MCF 10A (cell line): ENCODE measurements at regions of chr1 and their contacts with region 1.

Region 1: DNA sequence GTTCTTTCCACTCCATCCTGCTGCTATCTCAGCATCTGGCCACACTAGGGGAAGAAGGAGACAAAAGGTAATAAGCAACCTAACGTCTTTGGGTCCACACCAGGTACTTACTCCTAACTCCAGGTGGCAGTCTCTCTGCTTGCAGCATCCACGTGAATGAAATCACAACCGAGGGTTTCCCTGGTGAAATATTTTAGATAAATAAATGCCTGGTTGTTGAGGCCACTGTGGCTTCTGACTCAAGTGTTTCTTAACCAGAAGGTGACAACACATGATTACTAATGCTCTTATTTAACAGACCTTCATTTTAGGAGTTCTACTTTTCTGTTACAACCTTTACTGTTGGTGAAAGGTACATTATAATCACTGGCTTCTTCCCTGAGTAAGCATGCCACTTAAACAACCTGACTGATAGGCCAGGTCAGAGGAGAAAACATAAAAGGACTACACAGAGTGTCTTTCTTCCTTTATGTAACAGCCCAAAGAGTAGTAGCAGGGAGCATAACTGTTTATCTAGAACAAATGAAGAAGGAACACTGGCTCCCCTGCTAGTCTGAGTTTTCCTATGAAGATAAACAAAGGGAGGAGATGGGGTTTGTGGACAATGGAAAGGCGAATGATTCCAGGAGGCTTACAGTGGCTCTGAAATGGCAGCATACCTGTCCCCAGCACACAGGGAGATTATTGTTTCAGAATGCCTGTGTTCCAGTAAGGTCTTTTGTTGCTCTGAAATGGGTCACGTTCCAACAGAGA is 59.9 kb downstream of the SYT6 start:
- DNase-seq: peak; percentile 45
- H3K4me3 Mint-ChIP-seq: no peak overlapping the region
- H3K27ac Mint-ChIP-seq: no peak overlapping the region
- H3K4me1 Mint-ChIP-seq: peaks cover 11% of the 10 kb centered on the region
- H3K27me3 Mint-ChIP-seq: peaks cover 46% of the 10 kb centered on the region
- CTCF ChIP-seq: peak; percentile 23

Region 2: DNA sequence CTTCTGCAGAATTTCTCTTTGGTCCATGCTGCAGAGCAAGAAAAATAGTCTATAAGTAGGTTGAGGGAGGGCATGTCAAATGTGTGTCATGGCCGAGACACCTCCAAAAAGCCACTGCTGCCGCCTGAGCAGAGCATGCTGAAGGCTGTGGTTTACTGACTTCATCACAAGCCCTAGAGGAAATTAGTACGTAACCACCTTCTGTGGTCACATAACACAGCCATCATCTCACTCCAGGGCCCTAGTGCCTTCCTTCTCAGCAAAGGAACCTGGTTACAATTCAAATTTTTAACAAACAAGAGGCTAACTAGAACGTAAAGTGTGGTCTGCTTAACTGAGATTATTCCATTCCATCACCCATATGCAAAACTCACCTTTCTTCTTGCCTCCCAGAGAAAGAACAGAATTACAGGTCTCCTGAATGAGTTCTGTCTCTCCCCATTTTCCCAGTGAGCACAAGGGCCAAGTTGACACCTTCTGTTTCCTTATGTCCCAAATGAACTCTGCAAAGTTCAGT is 222.1 kb before region 1 on chr1 and contains the start of gene PTPN22:
- CTCF ChIA-PET with region 1: no interaction called
- POLR2A ChIA-PET with region 1: no interaction called
- intact Hi-C with region 1: no loop called
- DNase-seq: peak; percentile 45
- H3K4me3 Mint-ChIP-seq: no peak within 1 kb of the TSS
- H3K27ac Mint-ChIP-seq: peak within 1 kb of the TSS; percentile 12
- H3K4me1 Mint-ChIP-seq: peaks cover 11% of the 10 kb centered on the region
- H3K27me3 Mint-ChIP-seq: no peaks in the 10 kb centered on the region
- CTCF ChIP-seq: no peak
- total RNA-seq, gene PTPN22: 0.42 and 0.89 TPM in 2 replicates

Region 3: DNA sequence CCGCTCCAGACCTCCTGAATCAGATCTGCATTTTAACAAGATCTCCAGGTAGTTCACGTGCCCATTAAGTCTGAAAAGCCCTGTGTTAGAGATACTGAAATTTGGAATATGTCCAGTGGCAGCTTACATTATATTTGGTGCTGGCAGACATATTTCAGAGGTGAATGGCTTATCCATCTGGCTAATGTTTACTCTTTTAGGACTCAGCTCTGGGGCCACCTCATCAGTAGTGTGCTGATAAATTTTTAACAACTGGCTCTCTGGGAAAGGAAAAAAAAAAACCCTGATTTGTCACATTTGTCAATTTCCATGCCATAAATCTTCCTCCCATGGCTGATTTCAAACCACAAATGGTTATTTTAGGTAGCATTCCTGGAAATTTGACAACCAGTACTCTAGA is 85.1 kb after region 1 on chr1:
- CTCF ChIA-PET with region 1: no interaction called
- POLR2A ChIA-PET with region 1: no interaction called
- intact Hi-C with region 1: no loop called
- DNase-seq: no peak
- H3K4me3 Mint-ChIP-seq: no peak overlapping the region
- H3K27ac Mint-ChIP-seq: no peak overlapping the region
- H3K4me1 Mint-ChIP-seq: no peaks in the 10 kb centered on the region
- H3K27me3 Mint-ChIP-seq: peaks cover 12% of the 10 kb centered on the region
- CTCF ChIP-seq: no peak

Region 4: DNA sequence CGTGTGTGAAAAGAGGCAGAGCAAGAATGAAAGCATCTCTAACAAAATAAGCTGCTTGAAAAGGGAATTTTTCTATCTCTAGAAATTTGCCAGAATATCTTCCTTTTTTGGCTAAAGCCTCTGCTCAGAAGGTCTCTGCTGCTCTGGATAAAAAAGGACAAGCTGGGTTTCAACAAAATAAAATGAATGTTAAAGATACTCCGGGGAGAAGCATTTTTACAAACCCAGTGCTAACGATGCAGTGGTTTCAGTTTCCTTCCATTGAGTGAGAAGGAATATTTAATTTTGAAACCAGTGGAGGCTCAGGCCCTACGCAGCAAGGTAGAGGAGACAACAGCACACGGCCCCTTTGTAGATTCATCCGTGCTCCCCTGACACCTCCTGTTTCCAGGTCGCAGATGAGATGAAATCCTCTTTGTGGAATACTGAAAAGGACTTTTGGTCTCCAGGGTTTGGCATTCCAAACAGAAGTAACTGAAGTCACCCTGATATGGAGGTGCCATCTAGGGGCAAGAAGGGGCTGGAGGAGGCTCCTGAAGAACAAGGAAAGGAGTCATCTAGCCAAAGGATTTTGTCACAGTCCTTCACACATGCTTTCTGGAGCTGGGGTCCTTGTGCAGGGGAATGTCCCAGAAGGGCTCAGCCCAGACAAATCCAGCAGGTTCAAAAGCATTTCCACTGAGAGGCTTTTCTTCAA is 125.5 kb after region 1 on chr1:
- CTCF ChIA-PET with region 1: no interaction called
- POLR2A ChIA-PET with region 1: no interaction called
- intact Hi-C with region 1: loop called (anchors 5 kb)
- DNase-seq: peak; percentile 19
- H3K4me3 Mint-ChIP-seq: no peak overlapping the region
- H3K27ac Mint-ChIP-seq: no peak overlapping the region
- H3K4me1 Mint-ChIP-seq: no peaks in the 10 kb centered on the region
- H3K27me3 Mint-ChIP-seq: no peaks in the 10 kb centered on the region
- CTCF ChIP-seq: no peak